Endothelial cell of umbilical vein (primary cell): ENCODE measurements at regions of chr3 and their contacts with region 1.

Region 1: DNA sequence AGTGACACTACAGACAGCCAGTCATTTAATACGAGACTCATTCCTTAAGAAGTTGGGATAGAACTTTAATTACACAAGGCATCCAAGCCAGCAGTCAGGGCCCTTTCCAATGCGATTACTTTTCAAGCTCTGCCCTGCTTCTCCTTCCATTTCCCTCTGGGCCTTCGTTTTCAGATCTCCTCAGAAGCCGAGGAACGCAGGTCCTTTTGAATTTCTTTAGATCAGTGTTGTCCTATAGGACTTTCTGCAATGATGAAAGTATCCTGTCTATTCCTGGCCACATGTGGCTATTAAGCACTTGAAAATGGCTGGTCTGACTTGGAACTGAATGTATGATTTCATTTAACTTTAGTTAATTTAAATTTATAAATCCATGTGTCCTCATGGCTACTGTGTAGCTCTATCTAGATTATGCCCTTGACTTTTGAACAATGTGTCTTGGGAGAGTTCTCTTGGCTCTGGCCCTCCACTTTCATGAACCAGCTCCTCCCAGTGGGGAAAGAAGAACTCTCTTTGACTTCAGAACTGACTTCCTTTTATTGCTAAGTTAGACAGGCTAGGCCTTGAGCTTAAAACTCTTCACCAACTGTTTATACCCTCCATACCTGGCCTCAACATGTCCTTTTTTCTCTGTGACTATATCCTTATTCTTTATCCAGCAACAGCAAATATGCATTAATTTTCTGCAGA is 22.6 kb downstream of the TGFBR2 start:
- DNase-seq: no peak
- H3K4me3 ChIP-seq: no peak overlapping the region
- H3K27ac ChIP-seq: peak overlapping the region; percentile 39
- H3K4me1 ChIP-seq: peaks cover 87% of the 10 kb centered on the region
- H3K27me3 ChIP-seq: no peaks in the 10 kb centered on the region
- CTCF ChIP-seq: peak in 1 of 2 donors; percentile 6
- POLR2A ChIP-seq: no peak

Region 2: GRCh38 chr3:30112902-30113484 is 516.1 kb before region 1 on chr3:
- CTCF ChIA-PET with region 1: no interaction called
- POLR2A ChIA-PET with region 1: no interaction called
- dilution Hi-C with region 1: no loop called
- intact Hi-C with region 1: loop called (anchors 5 kb)
- DNase-seq: peak; percentile 76
- H3K4me3 ChIP-seq: no peak overlapping the region
- H3K27ac ChIP-seq: no peak overlapping the region
- H3K4me1 ChIP-seq: no peaks in the 10 kb centered on the region
- H3K27me3 ChIP-seq: peaks cover 0 to 2% of the 10 kb centered on the region in 2 experiments
- CTCF ChIP-seq: peak; percentile 26 to 37
- POLR2A ChIP-seq: no peak

Region 3: GRCh38 chr3:31077826-31078225 is 448.8 kb after region 1 on chr3:
- CTCF ChIA-PET with region 1: no interaction called
- POLR2A ChIA-PET with region 1: no interaction called
- dilution Hi-C with region 1: no loop called
- intact Hi-C with region 1: no loop called
- DNase-seq: peak; percentile 32
- H3K4me3 ChIP-seq: no peak overlapping the region
- H3K27ac ChIP-seq: peak overlapping the region; percentile 66
- H3K4me1 ChIP-seq: peaks cover 20% of the 10 kb centered on the region
- H3K27me3 ChIP-seq: no peaks in the 10 kb centered on the region
- CTCF ChIP-seq: no peak
- POLR2A ChIP-seq: no peak